ENCODE measurements at regions of chr1 and their contacts with region 1.

Region 1: DNA sequence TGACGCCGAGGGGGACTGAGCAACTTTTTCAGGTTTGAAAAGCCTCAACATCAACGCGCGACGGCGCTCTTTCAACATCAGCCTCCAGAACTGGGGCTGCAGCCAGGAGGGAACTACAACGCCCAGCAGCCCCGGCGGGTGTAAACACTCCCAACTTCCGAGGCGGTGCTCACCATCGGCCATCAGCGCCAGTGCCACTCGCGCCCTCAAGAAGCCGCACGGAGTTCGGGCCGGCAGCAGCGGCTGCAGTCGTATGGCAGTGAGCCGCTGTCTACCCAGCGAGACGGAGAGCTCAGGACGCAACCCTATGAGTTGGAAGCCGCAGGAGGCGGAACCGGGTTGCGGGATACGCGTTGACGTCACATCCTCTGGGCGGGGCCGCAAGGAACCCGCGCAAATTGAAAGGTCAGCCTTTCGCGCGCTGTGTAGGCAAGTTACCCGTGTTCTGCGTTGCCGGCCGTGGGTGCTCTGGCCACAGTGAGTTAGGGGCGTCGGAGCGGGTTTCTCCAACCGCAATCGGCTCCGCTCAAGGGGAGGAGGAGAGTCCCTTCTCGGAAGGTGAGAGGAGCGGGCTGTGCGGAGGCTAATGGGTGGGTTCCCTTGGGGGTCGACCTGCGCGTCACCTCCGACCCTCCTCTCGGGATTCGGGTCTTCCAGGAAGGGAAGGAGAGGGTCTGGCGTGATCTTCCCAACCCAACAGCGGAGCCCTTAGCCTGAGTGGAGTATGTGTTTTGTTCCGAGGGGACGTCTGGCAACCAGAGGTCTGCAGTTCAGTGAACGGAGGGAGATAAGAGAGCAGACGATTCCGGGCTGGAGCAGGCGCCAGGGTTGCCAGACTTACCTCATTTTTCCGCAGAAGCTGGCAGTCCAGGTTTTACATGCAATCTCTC is at the start of gene EXO1:
- DNase-seq: peak; percentile 95
- total RNA-seq, gene EXO1: 0.40 TPM

Region 2: DNA sequence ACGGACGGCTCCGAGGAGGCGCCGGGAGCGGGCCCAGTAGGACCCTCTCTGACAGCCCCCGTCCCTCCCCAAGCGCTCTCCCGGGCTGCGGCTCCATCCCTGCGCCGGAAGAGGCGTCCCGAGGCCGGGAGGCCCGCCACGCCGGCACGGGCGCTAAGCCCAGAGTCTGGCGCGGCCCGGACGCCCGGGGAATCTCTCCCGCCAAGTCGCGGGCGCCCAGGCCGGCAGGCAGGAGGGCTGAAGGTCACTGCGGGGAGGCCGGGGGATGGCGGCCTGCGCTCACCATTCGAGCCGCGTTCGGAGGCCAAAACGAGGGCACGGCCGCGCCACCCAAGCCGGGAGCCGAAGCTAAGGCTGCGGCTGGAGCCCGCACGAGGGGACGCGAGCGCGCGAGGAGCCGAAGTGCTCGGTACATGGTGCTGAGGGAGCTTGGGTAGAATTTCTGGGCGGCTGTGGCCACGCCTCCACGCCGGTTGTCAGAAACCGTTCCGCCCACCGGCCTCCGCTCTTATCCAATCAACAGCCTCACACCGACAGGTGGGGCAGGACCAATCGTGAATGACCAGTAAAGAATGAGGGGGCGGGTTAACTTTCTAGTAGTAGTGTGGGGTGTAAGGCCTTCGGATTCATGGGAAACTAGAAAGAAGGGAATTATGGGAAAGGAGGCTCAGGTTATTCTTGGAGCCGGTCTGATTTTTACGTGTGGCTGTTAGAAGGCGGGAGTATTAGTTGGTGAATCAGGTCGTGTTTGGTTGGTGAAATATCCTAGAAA is 328.5 kb before region 1 on chr1 and contains the start of gene FH:
- intact Hi-C with region 1: loop called (anchors 5 kb)
- DNase-seq: peak; percentile 98
- total RNA-seq, gene FH: 192 TPM

Region 3: DNA sequence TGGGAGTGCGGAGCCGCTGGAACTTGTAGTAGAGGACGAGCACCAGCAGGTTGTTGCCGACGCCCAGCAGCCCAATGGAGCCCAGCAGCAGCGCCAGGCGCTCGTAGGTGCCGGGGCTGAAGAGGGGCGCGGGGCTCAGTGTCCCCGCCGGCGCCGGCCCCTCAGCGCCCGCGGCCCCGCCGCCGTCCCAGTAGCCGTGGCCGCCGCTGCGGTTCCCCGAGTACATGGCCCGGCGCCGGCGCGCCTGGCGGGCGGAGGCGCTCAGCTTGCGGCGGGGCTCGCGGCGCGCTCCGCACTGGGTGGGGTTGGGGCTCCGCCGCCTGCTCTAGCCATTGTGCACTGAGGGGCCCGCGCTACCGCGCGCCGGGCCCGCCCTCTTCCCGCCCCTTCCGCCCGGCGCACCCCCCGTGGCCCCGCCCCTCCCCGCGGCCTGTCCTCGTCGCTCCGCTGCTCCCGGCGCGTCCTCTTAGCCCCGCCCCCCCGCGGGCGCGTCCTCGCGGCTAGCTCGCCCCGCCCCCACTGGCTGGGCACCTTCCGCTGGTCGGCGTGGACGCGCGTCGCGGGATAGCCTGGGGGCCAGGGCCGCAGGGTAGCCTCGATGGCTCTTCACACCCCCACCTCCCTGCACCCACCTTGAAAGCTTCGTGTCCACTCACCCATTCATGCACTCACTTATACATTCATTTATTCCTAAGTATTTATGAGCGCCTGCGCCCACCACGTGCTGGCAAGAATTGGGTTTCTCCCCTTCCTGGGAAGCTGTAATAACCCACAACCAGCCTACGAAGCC is 207.8 kb before region 1 on chr1 and contains the starts of genes CHML and OPN3:
- intact Hi-C with region 1: loop called (anchors 10 kb)
- DNase-seq: peak; percentile 97
- total RNA-seq, gene CHML: 5.7 TPM
- total RNA-seq, gene OPN3: 5.7 TPM